K562 (cell line): ENCODE measurements at regions of chr20 and their contacts with region 1.

Region 1: GRCh38 chr20:20824924-20825584 is 112.6 kb upstream of the RALGAPA2 start:
- DNase-seq: peak; percentile 42 to 54 (median 47)
- ATAC-seq: peak; percentile 77
- H3K4me3 ChIP-seq: no peak overlapping the region
- H3K27ac ChIP-seq: no peak overlapping the region
- H3K4me1 ChIP-seq: no peaks in the 10 kb centered on the region; a peak in 1 of 5 replicates
- H3K27me3 ChIP-seq: peaks cover 0 to 6% of the 10 kb centered on the region in 2 experiments; a peak in 3 of 5 replicates
- CTCF ChIP-seq: peak; percentile 52 to 70 (median 65); a peak in 5 of 6 replicates
- EP300 ChIP-seq: no peak
- POLR2A ChIP-seq: no peak
- RAD21 ChIP-seq: peak; percentile 37 to 60

Region 2: DNA sequence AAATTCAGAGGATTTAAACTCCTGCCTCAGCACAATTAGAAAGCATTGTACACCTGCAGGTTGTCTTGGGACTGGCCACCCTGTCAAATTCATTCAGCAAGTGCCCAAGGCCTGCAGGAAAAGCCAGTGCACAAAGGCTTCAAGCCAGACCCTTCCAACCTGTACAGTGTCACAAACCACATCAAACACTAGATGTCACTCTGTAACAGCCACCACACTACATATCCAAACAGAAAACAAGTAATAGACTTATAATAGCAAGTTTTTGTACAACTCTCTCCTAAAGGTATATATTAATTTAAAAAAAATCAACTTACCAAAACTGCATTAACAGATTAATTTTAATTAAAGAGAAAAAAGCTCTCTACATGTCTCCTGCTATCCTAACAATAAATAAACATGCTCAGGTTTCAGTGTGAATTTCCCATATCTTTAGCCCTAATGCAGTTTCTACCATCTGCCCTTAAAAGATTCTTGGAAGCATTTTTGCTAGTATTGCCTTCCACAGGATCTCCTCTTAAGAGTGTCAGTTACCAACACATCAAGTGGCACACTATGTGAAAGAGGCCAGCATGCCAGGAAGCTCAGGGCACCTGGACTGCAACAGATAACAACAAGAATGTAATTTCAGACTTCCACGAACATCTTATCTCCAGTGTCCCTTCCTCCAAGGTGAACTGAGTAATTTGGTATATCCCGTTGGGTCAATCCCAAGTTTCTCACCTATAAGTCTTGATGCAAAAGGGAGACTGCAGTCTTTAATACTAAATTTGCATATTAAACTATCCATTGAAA is 160.1 kb before region 1 on chr20:
- CTCF ChIA-PET with region 1: interaction called, 3 read pairs
- POLR2A ChIA-PET with region 1: no interaction called
- in situ Hi-C with region 1: no loop called
- intact Hi-C with region 1: loop called (anchors 1 kb)
- DNase-seq: peak in 1 of 4 experiments; percentile 21
- ATAC-seq: peak; percentile 84
- H3K4me3 ChIP-seq: no peak overlapping the region
- H3K27ac ChIP-seq: no peak overlapping the region
- H3K4me1 ChIP-seq: no peaks in the 10 kb centered on the region
- H3K27me3 ChIP-seq: no peaks in the 10 kb centered on the region
- CTCF ChIP-seq: peak; percentile 29 to 53 (median 38); a peak in 3 of 6 replicates
- EP300 ChIP-seq: no peak
- POLR2A ChIP-seq: no peak
- RAD21 ChIP-seq: peak; percentile 48 to 68